ENCODE measurements at regions of chrX and their contacts with region 1.

Region 1: DNA sequence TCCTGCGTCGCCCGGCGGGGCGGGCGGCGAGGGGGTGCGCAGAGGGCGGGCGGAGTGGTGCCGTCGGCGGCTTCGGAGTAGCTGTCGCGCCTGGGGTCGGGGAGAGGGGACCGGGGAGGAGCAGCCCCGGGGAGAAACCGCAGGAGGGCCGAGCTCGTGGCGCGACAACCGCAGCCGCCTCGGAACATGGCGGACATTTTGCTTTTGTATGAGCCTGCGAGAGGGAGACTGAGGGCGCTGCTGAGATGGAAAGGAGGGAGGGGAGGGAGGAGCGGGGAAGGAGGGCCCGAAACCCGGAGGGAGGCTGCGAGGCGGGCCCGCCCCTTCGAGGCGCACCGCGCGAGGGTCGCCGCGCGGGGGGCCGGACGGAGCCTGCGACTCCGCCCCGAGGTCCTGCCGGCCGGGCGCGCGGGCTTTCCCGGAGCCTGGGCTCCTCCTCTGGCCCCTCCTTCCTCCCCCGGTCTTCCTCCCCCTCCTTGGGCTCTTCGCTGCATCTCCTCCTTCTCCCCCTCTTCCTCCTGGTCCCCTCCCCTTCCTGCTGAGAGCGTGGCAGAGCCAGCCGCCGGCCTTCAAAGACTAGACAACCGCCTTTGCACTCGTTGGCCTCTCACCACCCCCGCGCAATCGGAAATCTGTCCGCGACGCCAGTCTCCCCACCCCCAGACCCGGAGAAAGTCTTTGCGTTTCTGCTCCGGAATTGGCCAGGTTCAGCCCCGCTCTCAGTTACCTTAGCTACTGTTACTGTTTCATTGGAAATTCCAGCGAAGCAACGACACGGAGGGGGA is 1.1 kb downstream of the INTS6L start:
- DNase-seq: peak; percentile 94
- H3K4me3 Mint-ChIP-seq: peak overlapping the region; percentile 92
- H3K27ac Mint-ChIP-seq: peak overlapping the region; percentile 99
- H3K4me1 Mint-ChIP-seq: peaks cover 31% of the 10 kb centered on the region
- H3K27me3 Mint-ChIP-seq: no peaks in the 10 kb centered on the region

Region 2: GRCh38 chrX:134807039-134807731 is 714.4 kb before region 1 on chrX:
- intact Hi-C with region 1: loop called (anchors 5 kb)
- DNase-seq: peak; percentile 96
- H3K4me3 Mint-ChIP-seq: peak overlapping the region; percentile 94
- H3K27ac Mint-ChIP-seq: peak overlapping the region; percentile 99
- H3K4me1 Mint-ChIP-seq: peaks cover 16% of the 10 kb centered on the region
- H3K27me3 Mint-ChIP-seq: no peaks in the 10 kb centered on the region

Region 3: GRCh38 chrX:135484641-135485289 is 36.8 kb before region 1 on chrX:
- intact Hi-C with region 1: loop called (anchors 1 kb)
- DNase-seq: peak; percentile 70
- H3K4me3 Mint-ChIP-seq: no peak overlapping the region
- H3K27ac Mint-ChIP-seq: no peak overlapping the region
- H3K4me1 Mint-ChIP-seq: peaks cover 3% of the 10 kb centered on the region
- H3K27me3 Mint-ChIP-seq: peaks cover 3% of the 10 kb centered on the region

Region 4: GRCh38 chrX:135572436-135572835 is 50.8 kb after region 1 on chrX:
- intact Hi-C with region 1: loop called (anchors 10 kb)
- DNase-seq: no peak
- H3K4me3 Mint-ChIP-seq: no peak overlapping the region
- H3K27ac Mint-ChIP-seq: no peak overlapping the region
- H3K4me1 Mint-ChIP-seq: peaks cover 2% of the 10 kb centered on the region
- H3K27me3 Mint-ChIP-seq: no peaks in the 10 kb centered on the region